HCT116 (cell line): ENCODE measurements at regions of chr1 and their contacts with region 1.

Region 1: DNA sequence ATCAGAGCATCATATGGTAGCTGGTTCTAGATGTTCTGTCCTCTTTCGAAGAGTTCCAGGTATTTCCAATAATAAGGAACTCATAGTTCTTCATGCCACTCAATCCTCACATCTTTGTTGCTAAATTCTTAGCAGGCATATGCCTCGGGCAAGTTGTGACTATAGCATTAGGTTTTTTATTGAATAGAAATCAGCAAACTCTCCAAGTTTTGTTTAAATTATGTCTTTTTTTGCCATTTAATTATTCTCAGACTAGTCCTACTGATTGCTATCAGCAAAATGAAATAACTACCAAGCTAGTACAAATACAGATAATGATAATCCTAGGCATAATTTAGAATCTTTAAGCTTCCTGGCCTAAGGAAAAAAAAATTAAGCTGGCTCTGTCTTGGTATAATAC is 1819.2 kb downstream of the PLA2G4A start:
- DNase-seq: no peak
- ATAC-seq: no peak
- H3K4me3 ChIP-seq: no peak overlapping the region
- H3K27ac ChIP-seq: no peak overlapping the region
- H3K4me1 ChIP-seq: no peaks in the 10 kb centered on the region
- H3K27me3 ChIP-seq: no peaks in the 10 kb centered on the region
- CTCF ChIP-seq: no peak
- POLR2A ChIP-seq: no peak
- RAD21 ChIP-seq: no peak

Region 2: DNA sequence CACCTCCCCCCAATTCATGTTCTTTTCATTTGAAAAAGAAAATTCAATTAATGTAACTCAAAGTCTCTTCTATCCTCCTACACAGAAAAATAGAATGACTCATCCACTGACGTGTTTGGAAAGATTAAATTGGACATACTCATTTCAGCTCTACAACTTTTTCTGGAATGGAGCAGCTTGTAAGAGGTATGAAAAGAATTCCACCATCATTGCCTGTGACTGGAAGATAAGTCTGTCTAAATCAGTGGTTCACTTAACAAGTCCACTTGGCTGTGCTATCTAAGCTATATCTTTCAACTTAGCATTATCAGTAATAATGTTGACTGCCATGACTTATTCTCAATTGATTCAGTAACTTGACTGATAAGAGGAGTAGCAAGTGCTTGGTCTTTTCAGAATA is 1127.5 kb after region 1 on chr1:
- CTCF ChIA-PET with region 1: no interaction called
- POLR2A ChIA-PET with region 1: no interaction called
- RAD21 ChIA-PET with region 1: no interaction called
- intact Hi-C with region 1: loop called (anchors 5 kb)
- DNase-seq: no peak
- ATAC-seq: no peak
- H3K4me3 ChIP-seq: no peak overlapping the region
- H3K27ac ChIP-seq: no peak overlapping the region
- H3K4me1 ChIP-seq: peaks cover 0 to 4% of the 10 kb centered on the region in 2 experiments; a peak in 1 of 4 replicates
- H3K27me3 ChIP-seq: no peaks in the 10 kb centered on the region
- CTCF ChIP-seq: no peak
- POLR2A ChIP-seq: no peak
- RAD21 ChIP-seq: no peak